Activated T-helper 1 cell treated with anti-CD3 and anti-CD28 coated beads, Interleukin-12 subunit alpha, Interleukin-12 subunit beta, Interleukin-2, Interleukin-4 antibody, amounts not matched to agents 30 ng/mL and 10 ng/mL and 1 ng/mL, durations not matched to agents 14 hours and 24 hours and 36 hours (primary cell): ENCODE measurements at regions of chr6 and their contacts with region 1.

Region 1: DNA sequence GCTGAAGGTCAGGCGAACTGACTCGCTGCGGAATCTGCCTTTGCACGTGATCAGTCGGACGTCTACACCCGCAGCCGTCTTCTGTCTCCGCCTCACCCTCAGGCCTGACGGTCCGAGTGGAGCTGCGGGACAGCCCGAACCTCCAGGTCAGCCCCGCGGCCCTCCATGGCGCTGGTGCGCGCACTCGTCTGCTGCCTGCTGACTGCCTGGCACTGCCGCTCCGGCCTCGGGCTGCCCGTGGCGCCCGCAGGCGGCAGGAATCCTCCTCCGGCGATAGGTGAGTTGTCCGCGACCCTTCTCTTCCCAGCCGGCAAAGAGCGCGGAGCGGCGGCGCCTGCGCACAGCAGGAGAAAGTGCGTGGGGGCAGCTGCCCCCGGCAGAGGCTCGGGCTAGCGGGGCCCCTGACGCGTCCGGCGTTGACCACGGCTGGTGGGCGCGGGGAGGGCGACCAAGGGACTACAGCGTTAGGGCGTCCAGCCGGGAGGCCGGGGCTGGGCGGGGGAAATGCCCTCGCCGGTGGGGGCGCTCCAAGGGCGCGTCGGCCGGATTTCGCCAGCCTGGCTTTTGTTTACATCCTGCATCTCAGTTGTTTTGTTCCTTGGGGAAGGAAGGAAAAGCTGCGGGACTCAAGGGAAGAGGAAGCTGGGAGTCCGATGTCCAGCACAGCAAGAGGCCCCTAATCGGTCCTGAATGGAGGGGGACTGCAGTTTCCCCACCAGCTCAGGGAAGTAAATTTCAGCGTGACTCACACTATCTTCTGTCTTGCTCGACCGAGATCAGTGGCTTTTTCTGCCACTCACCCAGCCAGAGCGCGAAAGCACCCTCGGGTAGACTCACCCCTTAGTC is at the start of gene SMPDL3A:
- DNase-seq: peak; percentile 9
- H3K4me3 Mint-ChIP-seq: peak within 1 kb of the TSS; percentile 91
- H3K27ac Mint-ChIP-seq: peak within 1 kb of the TSS; percentile 71
- H3K4me1 Mint-ChIP-seq: peaks cover 23% of the 10 kb centered on the region
- H3K27me3 Mint-ChIP-seq: peaks cover 60% of the 10 kb centered on the region
- total RNA-seq, gene SMPDL3A: 0.47 and 0.64 TPM in 2 replicates

Region 2: DNA sequence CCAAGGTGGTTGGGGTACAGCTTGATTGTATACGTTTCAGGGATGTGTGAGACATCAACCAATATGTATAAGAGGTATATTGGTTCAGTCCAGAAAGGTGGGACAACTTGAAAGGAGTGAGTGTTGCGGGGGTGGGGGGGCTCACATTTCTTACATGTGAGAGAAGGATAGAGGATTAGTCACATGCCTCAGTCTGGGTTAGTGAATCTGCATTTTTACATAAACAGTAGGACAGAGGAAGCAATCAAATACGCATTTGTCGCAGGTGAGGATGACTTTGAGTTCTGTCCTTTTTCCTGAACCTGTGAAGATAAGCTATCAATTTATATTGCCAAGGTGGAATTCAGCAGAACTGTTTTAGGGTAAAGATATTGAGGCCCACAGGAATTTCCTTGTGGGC is 1413.0 kb before region 1 on chr6:
- intact Hi-C with region 1: no loop called
- DNase-seq: no peak
- H3K4me3 Mint-ChIP-seq: no peak overlapping the region
- H3K27ac Mint-ChIP-seq: no peak overlapping the region
- H3K4me1 Mint-ChIP-seq: no peaks in the 10 kb centered on the region
- H3K27me3 Mint-ChIP-seq: no peaks in the 10 kb centered on the region

Region 3: DNA sequence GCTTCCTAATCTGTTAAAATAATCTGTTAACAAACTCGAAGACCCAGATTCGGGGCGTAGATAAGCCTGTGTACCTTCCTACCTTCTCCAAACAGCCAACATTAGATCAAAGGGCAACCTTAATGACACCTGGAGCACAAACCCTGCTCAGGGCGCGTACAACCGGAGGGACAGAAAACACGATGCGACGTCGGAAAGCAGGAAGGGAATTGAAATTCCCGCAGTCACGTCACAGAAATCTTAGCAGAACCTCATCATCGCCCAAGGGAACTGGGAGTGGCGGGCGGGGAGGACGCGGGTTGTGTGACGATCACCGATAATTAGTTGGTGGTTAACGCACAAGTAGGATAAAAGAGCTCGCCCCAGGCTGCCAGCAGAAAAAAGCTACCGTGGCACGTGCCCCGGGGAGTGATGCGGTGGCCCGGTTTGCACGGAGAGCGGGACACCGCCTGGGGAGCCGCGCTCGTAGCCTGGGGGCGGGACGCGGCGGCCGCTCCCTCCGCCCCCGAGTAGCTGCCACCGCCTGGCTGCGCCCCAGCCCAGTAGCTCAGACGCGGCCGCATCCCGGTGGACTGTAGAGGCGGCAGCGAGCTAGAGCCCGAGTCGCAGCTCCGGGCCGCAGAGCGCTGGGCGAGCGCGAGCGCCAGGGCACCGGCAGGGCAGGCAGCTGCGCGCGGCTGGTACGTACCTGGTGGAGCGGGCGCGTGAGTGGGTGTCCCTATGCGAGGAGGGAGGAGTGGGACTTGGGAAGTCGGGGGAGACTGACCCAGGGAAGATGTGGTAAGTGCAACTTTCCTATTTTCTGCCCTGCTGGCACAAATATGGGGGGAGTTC is 179.3 kb before region 1 on chr6 and contains the start of gene PKIB:
- intact Hi-C with region 1: loop called (anchors 5 kb)
- DNase-seq: peak; percentile 26
- H3K4me3 Mint-ChIP-seq: peak within 1 kb of the TSS; percentile 81
- H3K27ac Mint-ChIP-seq: no peak within 1 kb of the TSS
- H3K4me1 Mint-ChIP-seq: peaks cover 19% of the 10 kb centered on the region
- H3K27me3 Mint-ChIP-seq: peaks cover 23% of the 10 kb centered on the region
- total RNA-seq, gene PKIB: 0.44 TPM in 1 of 2 replicates, not detected in the other

Region 4: DNA sequence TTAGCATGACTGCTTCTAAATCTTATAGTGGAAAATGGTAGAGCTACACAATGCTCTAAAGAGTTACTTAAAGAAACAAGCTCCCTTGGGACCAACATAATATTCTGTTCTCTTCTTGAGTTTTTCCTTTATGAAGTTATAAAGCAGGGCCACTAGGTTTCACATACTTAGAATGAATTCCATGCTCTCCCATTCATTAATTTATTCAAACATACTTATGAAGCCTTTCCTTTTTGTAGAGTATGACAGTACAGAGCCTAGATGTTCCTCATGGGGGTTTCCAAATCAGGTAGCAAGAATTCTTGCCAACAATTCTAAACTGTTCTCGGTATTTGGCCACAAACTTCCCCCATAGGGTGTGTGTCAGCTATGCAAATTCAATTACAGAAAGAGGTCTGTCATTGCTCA is 30.5 kb before region 1 on chr6:
- intact Hi-C with region 1: loop called (anchors 2 kb)
- DNase-seq: no peak
- H3K4me3 Mint-ChIP-seq: no peak overlapping the region
- H3K27ac Mint-ChIP-seq: peak overlapping the region; percentile 5
- H3K4me1 Mint-ChIP-seq: peaks cover 9% of the 10 kb centered on the region
- H3K27me3 Mint-ChIP-seq: no peaks in the 10 kb centered on the region

Region 5: DNA sequence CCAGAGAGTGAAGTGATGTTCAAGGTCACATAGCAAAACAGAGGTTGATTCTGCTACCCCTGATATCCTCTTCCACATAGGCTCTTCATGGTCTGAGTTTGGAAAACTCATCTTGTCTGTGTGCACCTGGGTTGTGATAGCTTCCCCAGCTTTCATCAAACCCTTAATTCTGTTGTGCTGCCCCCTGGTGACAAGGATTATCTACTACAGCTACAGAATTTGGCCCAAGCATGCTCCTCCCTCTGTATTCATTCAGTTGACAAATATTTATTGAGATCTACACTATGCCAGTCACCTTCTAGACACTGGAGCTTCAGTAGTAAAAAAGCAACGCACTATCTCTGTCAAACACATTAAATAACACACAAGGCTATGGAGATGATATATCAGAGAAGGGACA is 50.1 kb after region 1 on chr6:
- intact Hi-C with region 1: loop called (anchors 5 kb)
- DNase-seq: peak; percentile 31
- H3K4me3 Mint-ChIP-seq: no peak overlapping the region
- H3K27ac Mint-ChIP-seq: no peak overlapping the region
- H3K4me1 Mint-ChIP-seq: no peaks in the 10 kb centered on the region
- H3K27me3 Mint-ChIP-seq: peaks cover 7% of the 10 kb centered on the region